ENCODE measurements at regions of chr20 and their contacts with region 1.

Region 1: DNA sequence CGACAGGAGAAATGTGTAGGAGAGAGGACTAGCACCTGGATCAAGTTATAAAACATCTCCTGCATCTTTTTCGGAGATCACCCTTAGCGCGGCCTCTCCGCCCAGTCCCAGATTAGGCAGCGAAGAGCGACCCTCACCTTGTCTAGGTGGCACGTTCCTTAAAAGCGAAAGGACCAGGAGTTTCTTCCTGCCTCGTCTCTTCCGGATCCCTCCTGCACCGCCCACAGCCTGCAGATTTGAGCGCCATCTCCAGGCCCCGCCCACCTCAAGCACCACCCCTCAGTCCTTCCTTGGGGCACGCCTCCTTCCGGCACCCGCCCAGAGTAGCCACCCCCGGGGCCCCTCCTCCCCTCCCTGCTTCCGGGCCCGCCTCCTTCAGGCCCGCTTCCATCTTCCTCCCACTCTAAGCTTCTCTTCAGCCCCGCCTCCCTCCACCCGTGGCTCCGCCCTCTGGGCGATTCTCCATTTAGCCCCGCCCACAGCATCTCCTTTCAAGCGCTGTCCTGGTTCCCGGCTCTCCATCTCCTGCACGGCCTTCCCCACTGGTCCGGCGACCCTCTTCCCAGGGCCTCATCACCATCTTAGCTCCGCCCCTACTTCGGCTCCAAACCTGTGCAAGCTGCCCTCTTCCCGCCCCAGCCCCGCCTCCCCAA is 662 bp upstream of the RALY start:
- DNase-seq: peak; percentile 99 to 100 (median 100)
- ATAC-seq: peak; percentile 95 to 96
- H3K4me3 ChIP-seq: peak overlapping the region; percentile 89
- H3K27ac ChIP-seq: peak overlapping the region; percentile 88
- H3K4me1 ChIP-seq: peaks cover 19% of the 10 kb centered on the region
- H3K27me3 ChIP-seq: no peaks in the 10 kb centered on the region

Region 2: DNA sequence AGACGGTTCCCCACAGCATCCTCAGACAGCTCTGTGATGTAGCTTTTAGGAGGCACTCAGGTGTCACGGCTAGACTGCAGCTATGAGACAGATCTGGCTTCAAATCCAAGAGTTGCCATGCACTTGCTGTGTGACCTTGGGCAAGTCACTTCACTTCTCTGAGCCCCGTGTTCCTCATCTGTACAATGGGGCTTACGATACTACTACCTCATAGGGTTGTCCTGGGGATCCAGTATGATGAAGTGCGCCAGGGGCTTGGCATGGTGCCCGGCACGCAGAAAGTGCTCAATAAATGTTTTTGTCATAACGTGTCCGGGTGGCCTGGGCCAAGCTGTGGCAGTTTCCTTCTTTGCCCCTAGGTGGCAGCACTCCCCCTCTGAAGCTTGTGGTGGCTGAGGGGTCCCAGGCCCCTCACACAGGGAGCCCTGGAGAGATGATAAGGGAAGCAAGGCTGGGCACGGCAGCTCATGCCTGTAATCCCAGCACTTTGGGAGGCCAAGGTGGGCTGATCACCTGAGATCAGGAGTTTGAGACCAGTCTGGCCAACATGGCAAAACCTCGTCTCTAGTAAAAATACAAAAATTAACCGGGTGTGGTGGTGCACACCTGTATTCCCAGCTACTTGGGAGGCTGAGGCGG is 201.0 kb before region 1 on chr20:
- intact Hi-C with region 1: loop called in 1 of 4 experiments (anchors 5 kb)
- DNase-seq: peak; percentile 41 to 75 (median 73)
- ATAC-seq: peak in 1 of 2 donors; percentile 13
- H3K4me3 ChIP-seq: no peak overlapping the region
- H3K27ac ChIP-seq: no peak overlapping the region
- H3K4me1 ChIP-seq: peaks cover 9% of the 10 kb centered on the region
- H3K27me3 ChIP-seq: no peaks in the 10 kb centered on the region

Region 3: GRCh38 chr20:33825340-33826269 is 167.4 kb before region 1 on chr20:
- intact Hi-C with region 1: no loop called
- DNase-seq: no peak
- ATAC-seq: no peak
- H3K4me3 ChIP-seq: no peak overlapping the region
- H3K27ac ChIP-seq: no peak overlapping the region
- H3K4me1 ChIP-seq: peaks cover 36% of the 10 kb centered on the region
- H3K27me3 ChIP-seq: no peaks in the 10 kb centered on the region

Region 4: DNA sequence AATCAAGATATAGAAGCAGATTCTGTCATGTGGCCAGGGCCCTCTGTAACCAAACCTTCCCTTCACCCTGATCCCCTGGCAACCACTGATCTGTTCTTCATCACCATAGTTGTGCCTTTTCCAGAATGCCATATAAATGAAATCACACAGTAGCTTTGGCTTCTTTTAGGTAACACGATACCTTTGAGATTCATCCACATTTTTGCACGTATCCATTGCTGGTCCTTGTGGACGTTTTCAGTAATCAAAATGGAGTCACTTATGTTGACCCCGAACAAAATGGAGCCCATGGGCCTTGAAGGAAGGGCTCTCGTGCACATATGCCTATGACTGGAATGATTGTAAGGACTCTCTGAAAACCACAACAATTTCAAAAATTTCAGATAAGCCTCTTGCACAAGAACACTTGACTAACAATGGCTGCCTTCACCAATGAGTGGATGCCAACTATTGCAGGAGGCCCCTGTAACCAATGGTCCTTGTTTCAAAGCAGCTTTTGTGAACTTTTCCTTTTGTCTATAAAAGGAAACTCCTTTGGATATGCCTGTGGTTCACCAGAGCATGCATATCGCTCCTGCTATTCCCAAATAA is 83.6 kb before region 1 on chr20:
- intact Hi-C with region 1: no loop called
- DNase-seq: peak in 1 of 3 donors; percentile 34
- ATAC-seq: peak; percentile 77 to 82
- H3K4me3 ChIP-seq: no peak overlapping the region
- H3K27ac ChIP-seq: no peak overlapping the region
- H3K4me1 ChIP-seq: peaks cover 8% of the 10 kb centered on the region
- H3K27me3 ChIP-seq: no peaks in the 10 kb centered on the region

Region 5: DNA sequence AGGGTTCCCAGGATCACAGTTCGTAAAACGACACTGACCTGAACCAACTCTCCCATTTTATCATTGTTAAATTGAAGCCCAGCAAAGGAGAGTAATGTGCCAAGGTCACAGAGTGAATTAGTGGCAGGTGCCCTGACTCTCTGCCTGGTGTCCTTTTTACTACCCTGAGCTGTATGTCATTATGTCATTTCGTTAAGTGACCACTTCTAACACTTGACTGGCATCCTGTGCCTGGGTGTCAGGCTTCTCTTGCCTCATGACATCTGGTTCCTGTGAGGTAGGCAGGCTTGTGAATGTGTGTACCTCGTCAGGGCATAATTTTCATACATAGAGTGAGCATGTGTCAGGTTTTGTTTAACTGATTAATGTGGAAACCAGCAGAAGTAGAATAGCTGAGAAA is 49.2 kb after region 1 on chr20:
- intact Hi-C with region 1: loop called in 1 of 4 experiments (anchors 5 kb)
- DNase-seq: no peak
- ATAC-seq: peak; percentile 47 to 49
- H3K4me3 ChIP-seq: no peak overlapping the region
- H3K27ac ChIP-seq: no peak overlapping the region
- H3K4me1 ChIP-seq: peaks cover 37% of the 10 kb centered on the region
- H3K27me3 ChIP-seq: no peaks in the 10 kb centered on the region

Measured in right cardiac atrium (tissue), 5 donors.